AG04450 (cell line): ENCODE measurements at regions of chr16 and their contacts with region 1.

Region 1: DNA sequence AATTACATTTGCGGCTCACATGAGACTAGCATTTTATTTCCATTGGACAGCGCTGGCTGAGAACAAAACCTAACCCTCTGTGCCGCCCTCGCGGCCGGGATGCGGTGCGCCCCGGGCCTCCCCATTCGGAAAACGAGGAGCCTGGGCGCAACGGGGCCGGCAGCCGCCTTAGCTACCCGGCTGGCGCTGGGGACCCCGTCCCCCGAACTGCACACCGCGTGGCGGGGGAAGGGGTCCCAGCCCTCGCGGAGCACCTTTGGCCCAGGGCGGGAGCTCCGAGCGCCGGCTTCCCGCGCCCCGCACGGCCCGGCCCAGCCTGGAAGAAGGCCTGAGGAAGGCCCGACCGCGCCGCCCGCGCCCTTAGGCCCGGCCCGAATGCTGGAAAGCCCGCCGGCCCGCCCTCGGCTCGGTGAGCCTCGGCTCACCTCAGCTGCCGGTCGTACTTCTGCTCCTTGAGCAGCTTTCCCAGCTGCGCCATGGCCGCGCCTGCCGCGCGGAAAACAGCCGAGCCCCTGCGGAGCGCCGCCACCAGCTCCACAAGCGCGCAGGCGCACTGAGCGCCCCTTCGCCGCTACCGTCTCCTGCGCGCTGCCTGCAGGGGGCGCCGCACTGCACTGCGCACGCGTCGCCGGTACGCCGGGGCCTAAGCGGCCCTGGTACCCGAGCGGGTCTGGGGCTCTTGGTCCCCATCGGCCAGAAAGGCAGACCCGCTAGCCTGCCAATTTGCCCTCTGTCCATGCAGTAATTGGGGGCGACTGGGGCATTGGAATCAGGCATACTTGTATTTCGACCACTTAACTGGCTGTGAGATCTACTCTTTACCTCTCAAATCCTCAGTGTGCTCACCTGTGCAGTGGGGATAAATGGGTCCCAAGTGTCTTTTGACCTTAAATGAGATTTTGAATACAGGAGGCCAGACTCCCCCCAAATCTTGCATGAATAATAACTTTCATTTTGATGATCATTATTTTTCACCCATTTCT is at the start of gene NAE1:
- DNase-seq: peak; percentile 53
- H3K4me3 ChIP-seq: peak within 1 kb of the TSS; percentile 68
- H3K27ac ChIP-seq: no peak within 1 kb of the TSS
- H3K27me3 ChIP-seq: peaks cover 3% of the 10 kb centered on the region
- CTCF ChIP-seq: peak; percentile 89
- polyA plus RNA-seq, gene NAE1: 31.3 and 49.8 TPM in 2 replicates

Region 2: GRCh38 chr16:66660422-66661209 is 170.1 kb before region 1 on chr16:
- CTCF ChIA-PET with region 1: interaction called, 14 read pairs
- POLR2A ChIA-PET with region 1: no interaction called
- DNase-seq: peak; percentile 41
- H3K4me3 ChIP-seq: peak overlapping the region; percentile 5; the same call in 1 of the 2 replicates
- H3K27ac ChIP-seq: peak overlapping the region; percentile 79
- H3K27me3 ChIP-seq: no peaks in the 10 kb centered on the region
- CTCF ChIP-seq: peak; percentile 49

Region 3: GRCh38 chr16:66758086-66758485 is 72.6 kb before region 1 on chr16:
- CTCF ChIA-PET with region 1: interaction called, 17 read pairs
- POLR2A ChIA-PET with region 1: no interaction called
- DNase-seq: no peak
- H3K4me3 ChIP-seq: no peak overlapping the region
- H3K27ac ChIP-seq: no peak overlapping the region
- H3K27me3 ChIP-seq: peaks cover 22% of the 10 kb centered on the region
- CTCF ChIP-seq: no peak

Region 4: GRCh38 chr16:66801320-66802105 is 29.2 kb before region 1 on chr16 and contains the start of gene TERB1:
- CTCF ChIA-PET with region 1: interaction called, 19 read pairs
- POLR2A ChIA-PET with region 1: no interaction called
- DNase-seq: no peak
- H3K4me3 ChIP-seq: no peak within 1 kb of the TSS
- H3K27ac ChIP-seq: no peak within 1 kb of the TSS
- H3K27me3 ChIP-seq: no peaks in the 10 kb centered on the region
- CTCF ChIP-seq: no peak
- polyA plus RNA-seq, gene TERB1: not detected in 2 replicates

Region 5: GRCh38 chr16:66844342-66845079 is 13.8 kb after region 1 on chr16 and contains the start of gene CA7:
- CTCF ChIA-PET with region 1: interaction called, 97 read pairs
- POLR2A ChIA-PET with region 1: interaction called, 3 read pairs
- DNase-seq: no peak
- H3K4me3 ChIP-seq: peak within 1 kb of the TSS; percentile 40
- H3K27ac ChIP-seq: no peak within 1 kb of the TSS
- H3K27me3 ChIP-seq: peaks cover 73% of the 10 kb centered on the region
- CTCF ChIP-seq: no peak
- polyA plus RNA-seq, gene CA7: not detected in 2 replicates